Mammary epithelial cell (primary cell): ENCODE measurements at regions of chr22 and their contacts with region 1.

Region 1: DNA sequence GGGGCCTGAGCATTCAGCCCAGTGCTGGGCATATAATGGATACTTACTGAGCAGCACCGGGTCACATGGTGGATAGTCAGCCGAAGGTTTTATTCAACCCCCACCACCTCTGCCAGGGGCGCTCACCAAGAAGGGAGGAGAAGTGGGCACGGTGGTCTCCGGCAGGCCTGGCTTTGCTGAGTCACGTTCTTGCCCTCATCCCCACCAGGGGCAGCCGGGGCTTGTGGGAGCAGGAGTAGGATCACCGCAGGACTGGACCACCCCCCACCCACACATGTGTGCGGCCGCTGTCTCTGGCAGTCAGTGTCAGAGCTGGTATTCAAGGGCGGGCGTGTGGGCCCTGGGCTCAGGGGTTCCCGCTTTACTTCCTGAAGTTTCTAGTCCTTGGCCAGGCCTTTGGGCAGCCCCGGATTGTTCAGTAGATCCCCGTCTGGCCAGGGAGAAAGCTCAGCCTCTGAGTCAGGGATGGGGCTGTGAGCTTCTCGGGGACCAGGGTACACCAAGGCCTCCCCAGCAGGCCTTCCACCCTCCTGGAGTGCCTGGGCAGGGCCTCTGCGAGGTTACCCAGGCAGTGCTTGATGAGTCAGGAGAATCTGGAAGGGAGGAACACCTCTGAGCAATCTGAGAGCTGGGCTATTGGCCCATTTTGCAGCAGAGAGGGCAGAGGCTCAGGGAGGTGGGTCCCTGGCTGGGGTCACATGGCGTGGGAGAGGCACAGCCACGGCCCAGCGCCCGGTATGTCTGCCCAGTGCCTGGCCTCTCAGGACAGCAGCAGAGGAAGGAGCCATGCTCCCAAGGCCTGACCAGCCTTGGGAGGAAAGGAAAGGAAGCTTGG is 60.6 kb downstream of the RTL6 start:
- DNase-seq: no peak
- H3K4me3 ChIP-seq: no peak overlapping the region
- H3K27ac ChIP-seq: no peak overlapping the region
- H3K4me1 ChIP-seq: no peaks in the 10 kb centered on the region
- H3K27me3 ChIP-seq: no peaks in the 10 kb centered on the region
- CTCF ChIP-seq: no peak

Region 2: DNA sequence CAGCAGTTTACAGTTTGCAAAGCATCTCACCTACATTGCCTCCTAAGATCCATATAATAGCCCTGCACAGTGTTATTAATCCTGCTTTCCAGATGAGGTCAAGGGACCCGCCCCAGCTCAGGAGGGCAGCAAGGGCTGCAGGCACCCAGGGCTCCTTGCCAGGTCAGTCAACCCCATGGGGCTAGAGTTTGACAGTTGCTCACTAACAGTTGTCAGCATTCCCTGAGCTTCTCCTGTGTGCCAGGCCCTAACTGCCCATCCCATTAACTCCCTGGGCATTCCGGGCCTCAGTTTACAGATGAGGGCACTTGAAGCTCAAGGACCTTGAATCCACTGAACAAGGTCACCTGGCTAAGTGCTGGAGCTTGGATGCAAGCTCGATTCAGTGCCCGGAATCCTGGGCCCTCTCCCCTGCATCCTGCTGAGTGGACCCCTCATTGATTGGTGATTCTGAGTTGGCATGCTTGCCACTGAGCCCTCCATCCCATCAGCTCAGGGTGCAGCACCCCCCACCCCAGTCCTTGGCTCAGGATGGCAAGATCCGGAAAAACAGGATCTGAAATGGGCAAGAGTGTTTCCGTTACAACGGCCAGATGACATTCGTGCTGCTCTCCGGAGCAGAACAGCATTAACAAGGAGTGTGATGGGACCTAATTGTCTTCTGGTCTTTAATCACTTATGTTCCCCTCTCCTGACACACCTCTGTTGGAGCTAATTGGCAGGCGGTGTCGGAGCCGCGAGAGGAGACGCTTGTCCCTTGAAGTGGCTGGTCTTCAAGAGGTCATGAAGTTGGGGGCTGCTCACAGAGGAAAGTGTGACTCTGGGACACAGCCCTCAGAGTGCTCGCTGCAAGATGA is 37.3 kb before region 1 on chr22:
- CTCF ChIA-PET with region 1: no interaction called
- dilution Hi-C with region 1: loop called (anchors 5 kb)
- in situ Hi-C with region 1: no loop called
- intact Hi-C with region 1: no loop called
- DNase-seq: no peak
- H3K4me3 ChIP-seq: no peak overlapping the region
- H3K27ac ChIP-seq: no peak overlapping the region
- H3K4me1 ChIP-seq: peaks cover 6% of the 10 kb centered on the region
- H3K27me3 ChIP-seq: no peaks in the 10 kb centered on the region
- CTCF ChIP-seq: no peak